IMR-90 (cell line): ENCODE measurements at regions of chr2 and their contacts with region 1.

Region 1: GRCh38 chr2:182522405-182522896 is 95.6 kb upstream of the PDE1A start:
- DNase-seq: no peak
- ATAC-seq: peak; percentile 63
- H3K4me3 ChIP-seq: no peak overlapping the region
- H3K27ac ChIP-seq: no peak overlapping the region
- H3K4me1 ChIP-seq: peaks cover 3% of the 10 kb centered on the region; the same call in 1 of the 2 replicates
- H3K27me3 ChIP-seq: no peaks in the 10 kb centered on the region; the same call in 1 of the 2 replicates
- CTCF ChIP-seq: no peak
- POLR2A ChIP-seq: no peak
- RAD21 ChIP-seq: no peak

Region 2: DNA sequence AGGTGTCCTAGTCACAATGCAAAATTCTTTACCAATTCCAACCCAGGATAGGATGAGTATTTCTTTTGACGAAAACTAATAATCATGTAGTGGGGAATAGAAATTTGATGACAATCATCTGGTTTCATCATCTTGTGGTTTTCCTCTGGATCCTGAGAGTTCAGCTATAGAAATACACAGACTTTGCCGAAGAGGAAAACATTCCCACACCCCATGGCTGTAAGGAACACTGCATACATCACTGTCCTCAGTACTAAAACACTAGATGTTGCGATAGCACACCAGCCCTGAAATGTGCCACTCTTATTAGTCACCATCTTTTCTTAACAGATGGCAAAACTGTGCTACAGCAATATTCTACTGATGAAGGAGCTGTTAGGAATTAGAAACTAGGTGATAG is 894.9 kb before region 1 on chr2:
- CTCF ChIA-PET with region 1: no interaction called
- POLR2A ChIA-PET with region 1: no interaction called
- dilution Hi-C with region 1: no loop called
- in situ Hi-C with region 1: no loop called
- intact Hi-C with region 1: loop called (anchors 10 kb)
- DNase-seq: peak; percentile 1
- ATAC-seq: no peak
- H3K4me3 ChIP-seq: no peak overlapping the region
- H3K27ac ChIP-seq: no peak overlapping the region
- H3K4me1 ChIP-seq: no peaks in the 10 kb centered on the region
- H3K27me3 ChIP-seq: peaks cover 3% of the 10 kb centered on the region; the same call in 1 of the 2 replicates
- CTCF ChIP-seq: no peak
- POLR2A ChIP-seq: no peak
- RAD21 ChIP-seq: no peak